ENCODE measurements at regions of chr19 and their contacts with region 1.

Region 1: GRCh38 chr19:18675779-18676178 is 7.7 kb upstream of the CRTC1 start:
- DNase-seq: no peak
- ATAC-seq: no peak
- H3K4me3 ChIP-seq: no peak overlapping the region
- H3K27ac ChIP-seq: no peak overlapping the region
- H3K4me1 ChIP-seq: no peaks in the 10 kb centered on the region
- H3K27me3 ChIP-seq: no peaks in the 10 kb centered on the region

Region 2: GRCh38 chr19:18450931-18451845 is 224.6 kb before region 1 on chr19:
- intact Hi-C with region 1: loop called in 1 of 2 experiments (anchors 5 kb)
- DNase-seq: peak; percentile 87 to 96
- ATAC-seq: peak; percentile 84
- H3K4me3 ChIP-seq: no peak overlapping the region
- H3K27ac ChIP-seq: no peak overlapping the region
- H3K4me1 ChIP-seq: no peaks in the 10 kb centered on the region
- H3K27me3 ChIP-seq: no peaks in the 10 kb centered on the region

Region 3: DNA sequence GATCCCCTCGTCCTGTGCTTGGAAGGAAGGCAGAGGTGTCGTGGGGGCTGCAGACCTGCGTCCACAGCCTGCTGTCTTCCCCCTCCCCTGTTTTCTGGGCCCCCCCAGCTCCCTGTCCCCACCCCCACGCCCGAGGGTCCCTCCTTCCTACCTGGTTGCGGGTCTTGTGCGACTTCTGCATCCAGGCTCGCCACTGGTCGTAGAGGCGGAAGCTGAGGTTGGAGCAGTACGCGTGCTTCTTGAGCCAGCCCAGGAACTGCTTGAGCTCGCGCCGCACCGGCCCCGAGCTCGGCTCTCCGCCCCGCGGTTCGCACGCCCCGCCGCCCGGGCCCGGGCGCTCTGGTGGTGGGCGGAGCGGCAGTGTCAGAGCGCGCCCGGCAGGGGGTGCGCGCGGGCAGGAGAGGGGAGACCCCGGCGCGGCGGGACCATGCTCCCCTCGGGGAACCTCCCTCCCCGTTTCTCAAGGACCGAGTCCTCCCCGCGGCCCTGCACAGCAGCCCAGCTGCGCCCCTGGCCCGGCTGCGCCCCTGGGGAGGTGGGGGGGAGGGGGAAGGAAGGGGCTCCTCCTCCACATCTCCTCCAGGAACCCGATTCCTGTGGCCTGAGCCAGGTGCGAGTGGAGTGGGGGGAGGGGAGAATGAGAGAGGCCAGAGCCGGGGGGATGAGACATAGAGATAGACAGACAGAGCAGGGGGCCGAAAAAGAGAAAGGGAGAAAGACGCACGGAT is 81.5 kb before region 1 on chr19:
- intact Hi-C with region 1: loop called (anchors 5 kb)
- DNase-seq: peak; percentile 84 to 93
- ATAC-seq: peak; percentile 88
- H3K4me3 ChIP-seq: no peak overlapping the region
- H3K27ac ChIP-seq: no peak overlapping the region
- H3K4me1 ChIP-seq: no peaks in the 10 kb centered on the region
- H3K27me3 ChIP-seq: no peaks in the 10 kb centered on the region

Region 4: GRCh38 chr19:18645035-18645511 is 30.7 kb before region 1 on chr19:
- intact Hi-C with region 1: no loop called
- DNase-seq: peak; percentile 84 to 89
- ATAC-seq: peak; percentile 64
- H3K4me3 ChIP-seq: no peak overlapping the region
- H3K27ac ChIP-seq: peak overlapping the region; percentile 38 to 70
- H3K4me1 ChIP-seq: no peaks in the 10 kb centered on the region
- H3K27me3 ChIP-seq: no peaks in the 10 kb centered on the region

Measured in aorta (tissue), 5 donors.